Heart left ventricle (tissue), 16 donors: ENCODE measurements at regions of chr1 and their contacts with region 1.

Region 1: DNA sequence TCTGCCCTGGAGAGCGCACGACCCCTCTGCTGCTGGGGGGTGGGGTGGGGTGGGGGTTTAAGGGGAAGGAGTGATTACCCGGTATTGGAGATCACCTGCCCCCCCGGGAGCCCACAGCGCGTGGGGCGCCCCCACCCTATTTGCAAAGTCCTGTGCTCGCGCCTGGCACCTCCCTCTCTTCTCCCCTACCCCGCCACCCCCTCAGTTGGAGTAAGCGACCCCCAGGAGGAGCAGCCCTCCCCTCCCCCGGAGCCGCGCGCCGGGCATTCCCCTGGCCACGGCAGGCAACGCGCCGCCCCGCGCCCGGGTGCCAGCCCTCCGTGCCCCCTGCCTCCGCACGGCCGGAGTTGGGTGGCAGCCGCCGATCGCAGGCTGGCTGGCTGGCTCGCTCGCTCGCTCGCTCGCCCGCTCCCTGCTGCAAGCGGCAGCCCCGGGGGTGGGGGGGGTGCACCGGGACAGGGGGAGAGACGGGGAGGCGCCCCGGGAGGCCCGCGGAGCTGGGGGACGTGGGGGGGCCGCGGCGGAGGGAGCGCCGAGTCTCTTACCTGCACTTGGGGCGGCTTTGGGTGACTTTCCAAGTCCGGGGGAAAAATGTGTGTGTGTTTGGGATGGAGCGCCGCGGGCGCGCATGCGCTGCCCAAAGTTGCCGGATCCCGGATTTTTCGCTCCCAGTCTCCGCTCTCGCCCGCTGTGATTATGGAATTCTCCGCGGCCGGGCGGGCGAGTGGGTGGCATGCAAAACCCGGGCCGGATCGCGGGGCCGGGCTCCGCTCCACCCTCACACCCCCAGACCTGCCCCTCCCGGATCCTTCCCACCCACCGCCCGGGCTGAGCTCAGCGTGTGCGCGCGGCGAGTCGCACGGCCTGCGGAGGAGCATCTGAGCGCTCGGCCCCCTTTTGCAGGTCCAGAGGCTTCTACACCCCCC is at the start of gene CASZ1:
- DNase-seq: peak; percentile 83 to 90 (median 85)
- ATAC-seq: peak; percentile 39 to 71 (median 62)
- H3K4me3 ChIP-seq: peak within 1 kb of the TSS; percentile 50 to 95 (median 76)
- H3K27ac ChIP-seq: peak within 1 kb of the TSS; percentile 76 to 98 (median 92)
- H3K4me1 ChIP-seq: peaks cover 0 to 43% (median 11%) of the 10 kb centered on the region in 12 donors
- H3K27me3 ChIP-seq: peaks cover 0 to 59% (median 0%) of the 10 kb centered on the region in 9 donors
- CTCF ChIP-seq: no peak
- POLR2A ChIP-seq: peak in 1 of 2 donors; percentile 56
- total RNA-seq, gene CASZ1: 39.5 to 84.9 (median 63.2) TPM

Region 2: GRCh38 chr1:10507111-10507879 is 289.0 kb before region 1 on chr1:
- intact Hi-C with region 1: loop called in 1 of 10 experiments (anchors 10 kb)
- DNase-seq: peak; percentile 49 to 71 (median 66)
- ATAC-seq: peak; percentile 71 to 90 (median 85)
- H3K4me3 ChIP-seq: no peak overlapping the region
- H3K27ac ChIP-seq: no peak overlapping the region
- H3K4me1 ChIP-seq: peaks cover 0 to 37% (median 26%) of the 10 kb centered on the region in 12 donors
- H3K27me3 ChIP-seq: no peaks in the 10 kb centered on the region
- CTCF ChIP-seq: peak; percentile 73 to 90 (median 80)
- POLR2A ChIP-seq: no peak

Region 3: GRCh38 chr1:10679496-10680220 is 116.6 kb before region 1 on chr1:
- intact Hi-C with region 1: loop called in 5 of 10 experiments (anchors 5 to 10 kb)
- DNase-seq: peak in 4 of 5 donors; percentile 47 to 59 (median 56)
- ATAC-seq: peak in 1 of 4 donors; percentile 17
- H3K4me3 ChIP-seq: peak overlapping the region in 1 of 12 donors; percentile 2
- H3K27ac ChIP-seq: peak overlapping the region in 8 of 12 donors; percentile 38 to 94 (median 52)
- H3K4me1 ChIP-seq: peaks cover 15 to 100% (median 87%) of the 10 kb centered on the region in 12 donors
- H3K27me3 ChIP-seq: no peaks in the 10 kb centered on the region
- CTCF ChIP-seq: no peak
- POLR2A ChIP-seq: no peak

Region 4: GRCh38 chr1:10694633-10695627 is 101.4 kb before region 1 on chr1:
- intact Hi-C with region 1: loop called in 3 of 10 experiments (anchors 5 kb)
- DNase-seq: peak; percentile 92 to 95 (median 94)
- ATAC-seq: peak; percentile 72 to 85 (median 76)
- H3K4me3 ChIP-seq: peak overlapping the region; percentile 32 to 89 (median 56)
- H3K27ac ChIP-seq: peak overlapping the region; percentile 76 to 94 (median 88)
- H3K4me1 ChIP-seq: peaks cover 4 to 72% (median 41%) of the 10 kb centered on the region in 12 donors
- H3K27me3 ChIP-seq: no peaks in the 10 kb centered on the region
- CTCF ChIP-seq: no peak
- POLR2A ChIP-seq: no peak

Region 5: GRCh38 chr1:10856863-10857598 is 60.7 kb after region 1 on chr1:
- intact Hi-C with region 1: loop called in 9 of 10 experiments (anchors 2 to 10 kb)
- DNase-seq: peak in 1 of 5 donors; percentile 25
- ATAC-seq: peak in 2 of 4 donors; percentile 17 to 27
- H3K4me3 ChIP-seq: no peak overlapping the region
- H3K27ac ChIP-seq: peak overlapping the region in 9 of 12 donors; percentile 15 to 92 (median 78)
- H3K4me1 ChIP-seq: peaks cover 0 to 42% (median 10%) of the 10 kb centered on the region in 12 donors
- H3K27me3 ChIP-seq: peaks cover 0 to 21% (median 0%) of the 10 kb centered on the region in 9 donors
- CTCF ChIP-seq: no peak
- POLR2A ChIP-seq: no peak